ENCODE measurements at regions of chr3 and their contacts with region 1.

Region 1: DNA sequence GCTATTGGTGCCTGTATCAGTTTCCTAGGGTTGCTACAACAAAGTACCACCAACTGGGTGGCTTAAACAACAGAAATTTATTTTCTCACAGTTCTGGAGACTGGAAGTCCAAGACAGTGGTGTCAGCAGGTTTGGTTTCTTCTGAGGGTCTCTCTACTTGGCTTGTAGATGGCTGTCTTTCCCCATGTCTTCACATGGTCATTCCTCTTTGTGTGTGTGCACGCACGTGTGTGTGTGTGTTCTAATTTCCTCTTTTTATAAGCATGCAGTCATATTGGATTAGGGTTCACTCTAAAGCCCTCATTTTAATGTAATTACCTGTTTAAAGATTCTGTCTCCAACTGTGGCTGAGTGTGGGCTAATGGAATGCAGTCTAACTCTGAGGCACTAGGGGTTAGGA is 182.5 kb downstream of the SPATA16 start:
- DNase-seq: no peak
- H3K4me3 ChIP-seq: no peak overlapping the region
- H3K27ac ChIP-seq: no peak overlapping the region
- H3K4me1 ChIP-seq: no peaks in the 10 kb centered on the region
- H3K27me3 ChIP-seq: no peaks in the 10 kb centered on the region
- CTCF ChIP-seq: no peak
- EP300 ChIP-seq: no peak
- POLR2A ChIP-seq: no peak

Region 2: DNA sequence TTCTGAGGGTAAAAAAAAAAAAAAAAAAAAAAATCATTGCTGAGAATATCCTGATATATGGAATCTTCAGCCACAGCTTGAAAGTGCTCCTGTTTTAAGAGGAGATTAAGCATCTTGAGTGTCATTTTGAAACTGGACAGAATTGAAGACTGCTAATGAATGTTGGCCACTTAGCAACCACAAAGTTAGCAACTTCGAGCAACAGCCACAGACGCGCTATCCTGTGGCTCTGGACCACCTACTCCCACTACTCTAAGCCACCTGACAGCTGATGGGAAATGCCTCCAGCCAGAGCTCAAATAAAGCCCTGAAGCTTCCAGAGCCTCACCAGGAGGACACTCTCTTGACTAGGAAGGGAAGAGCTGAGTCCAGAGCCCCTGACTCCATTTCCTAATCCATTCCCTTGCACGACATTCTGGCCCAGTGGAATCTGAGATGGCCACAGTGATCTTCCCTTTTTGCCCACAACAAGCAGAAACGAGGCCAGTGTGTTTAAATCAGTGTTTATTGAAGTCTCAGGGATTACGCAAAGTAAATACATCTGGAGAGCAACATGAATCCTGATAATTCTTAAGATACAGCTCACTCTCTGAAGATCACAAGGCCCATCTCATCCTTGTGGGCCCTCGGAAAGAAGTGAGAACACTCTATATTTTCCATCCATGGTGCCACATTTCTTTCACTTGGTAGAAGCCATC is 1056.8 kb before region 1 on chr3:
- in situ Hi-C with region 1: no loop called
- intact Hi-C with region 1: loop called (anchors 5 kb)
- DNase-seq: no peak
- H3K4me3 ChIP-seq: no peak overlapping the region
- H3K27ac ChIP-seq: no peak overlapping the region
- H3K4me1 ChIP-seq: no peaks in the 10 kb centered on the region
- H3K27me3 ChIP-seq: no peaks in the 10 kb centered on the region
- CTCF ChIP-seq: no peak
- EP300 ChIP-seq: no peak
- POLR2A ChIP-seq: no peak